ENCODE measurements at regions of chr7 and their contacts with region 1.

Region 1: GRCh38 chr7:155298834-155299534 is 1.3 kb downstream of the INSIG1 start:
- DNase-seq: peak; percentile 98
- H3K4me3 Mint-ChIP-seq: peak overlapping the region; percentile 89
- H3K27ac Mint-ChIP-seq: peak overlapping the region; percentile 97
- H3K4me1 Mint-ChIP-seq: peaks cover 51% of the 10 kb centered on the region
- H3K27me3 Mint-ChIP-seq: no peaks in the 10 kb centered on the region

Region 2: GRCh38 chr7:155205368-155206317 is 93.3 kb before region 1 on chr7:
- CTCF ChIA-PET with region 1: interaction called, 14 read pairs
- POLR2A ChIA-PET with region 1: interaction called, 13 read pairs
- DNase-seq: peak; percentile 91
- H3K4me3 Mint-ChIP-seq: peak overlapping the region; percentile 69
- H3K27ac Mint-ChIP-seq: peak overlapping the region; percentile 96
- H3K4me1 Mint-ChIP-seq: peaks cover 32% of the 10 kb centered on the region
- H3K27me3 Mint-ChIP-seq: no peaks in the 10 kb centered on the region